ENCODE measurements at regions of chr9 and their contacts with region 1.

Region 1: DNA sequence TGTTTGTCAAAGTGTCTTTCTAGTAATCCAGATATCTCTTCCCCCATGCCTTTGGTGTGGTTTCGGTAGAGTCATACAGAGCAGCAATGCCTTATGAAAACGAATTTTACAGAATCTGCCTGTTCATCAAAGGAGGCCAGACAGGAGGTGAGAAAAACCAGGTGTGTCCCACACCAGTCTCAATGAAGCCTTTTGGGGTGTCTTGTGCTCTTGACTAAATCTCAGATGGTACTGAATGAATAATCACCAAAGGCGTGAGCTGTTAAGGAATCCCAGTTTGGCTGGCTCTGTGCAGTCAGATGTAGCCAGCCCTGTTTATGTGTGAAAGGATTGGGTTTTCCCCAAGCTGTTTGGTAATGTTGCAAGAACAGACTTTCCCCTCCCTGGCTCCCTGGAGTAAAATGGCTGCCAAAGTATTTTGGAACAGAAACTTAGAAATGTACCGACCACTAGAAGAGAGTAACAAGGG is 70.8 kb upstream of the CDKN2B start:
- DNase-seq: peak; percentile 76
- H3K4me3 Mint-ChIP-seq: peak overlapping the region; percentile 24
- H3K27ac Mint-ChIP-seq: peak overlapping the region; percentile 42
- H3K4me1 Mint-ChIP-seq: peaks cover 43% of the 10 kb centered on the region
- H3K27me3 Mint-ChIP-seq: peaks cover 52% of the 10 kb centered on the region

Region 2: DNA sequence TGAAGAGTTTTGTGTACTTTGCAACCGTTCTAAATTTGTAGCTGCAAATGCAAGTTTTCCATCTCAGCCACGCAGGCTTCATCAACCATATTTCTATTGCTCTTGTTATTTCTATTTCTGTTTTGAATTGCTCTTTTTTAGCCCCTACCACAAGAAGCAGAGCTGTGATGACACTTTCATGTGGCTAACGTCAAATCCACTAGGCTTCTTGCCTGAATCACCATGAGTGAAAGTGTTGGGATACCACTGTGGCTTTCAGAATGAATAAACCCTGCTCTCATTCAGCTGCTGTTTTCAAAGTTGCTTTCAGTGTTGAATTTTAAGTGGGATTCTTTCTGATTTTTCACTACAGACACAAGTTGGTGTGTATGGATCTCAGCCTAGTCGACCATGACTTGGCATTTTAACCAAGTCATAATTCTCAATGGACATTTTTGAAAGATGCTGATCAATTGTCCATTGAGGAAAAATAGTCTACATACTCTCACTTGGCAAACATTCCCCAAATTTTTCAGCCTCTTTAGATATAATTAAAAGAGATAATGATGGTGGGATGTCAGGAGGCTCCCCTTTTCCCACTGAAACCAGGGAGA is 318.5 kb before region 1 on chr9:
- CTCF ChIA-PET with region 1: no interaction called
- POLR2A ChIA-PET with region 1: no interaction called
- intact Hi-C with region 1: loop called (anchors 1 kb)
- DNase-seq: peak; percentile 42
- H3K4me3 Mint-ChIP-seq: no peak overlapping the region
- H3K27ac Mint-ChIP-seq: no peak overlapping the region
- H3K4me1 Mint-ChIP-seq: peaks cover 10% of the 10 kb centered on the region
- H3K27me3 Mint-ChIP-seq: peaks cover 40% of the 10 kb centered on the region

Region 3: DNA sequence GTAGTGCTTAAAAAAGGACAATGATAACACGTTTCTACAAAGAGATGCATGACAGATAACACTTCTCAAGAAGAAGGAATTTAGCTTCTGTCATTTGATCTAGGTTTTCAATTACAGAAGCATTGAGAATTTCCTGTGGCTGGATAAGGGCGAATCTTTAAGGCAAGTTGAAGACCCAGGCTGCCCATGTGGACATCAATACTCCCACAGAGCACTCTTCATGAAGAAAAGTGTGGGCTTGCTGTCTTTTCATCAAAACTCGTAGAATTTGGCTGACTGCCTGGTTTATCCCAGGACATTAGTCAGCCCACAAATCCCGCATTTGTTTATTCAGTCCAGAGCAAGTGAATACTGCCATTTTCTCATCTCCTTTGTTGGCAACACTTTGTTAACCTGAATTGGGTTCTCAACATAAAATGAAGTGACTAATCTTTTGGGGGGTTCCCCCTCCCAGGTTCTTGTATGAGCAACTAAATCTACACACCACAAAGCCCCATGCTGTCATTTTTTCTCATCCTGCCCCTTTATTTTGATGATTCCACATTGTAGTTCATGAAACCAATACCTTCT is 27.4 kb before region 1 on chr9:
- CTCF ChIA-PET with region 1: no interaction called
- POLR2A ChIA-PET with region 1: interaction called, 4 read pairs
- intact Hi-C with region 1: loop called (anchors 1 kb)
- DNase-seq: peak; percentile 50
- H3K4me3 Mint-ChIP-seq: no peak overlapping the region
- H3K27ac Mint-ChIP-seq: no peak overlapping the region
- H3K4me1 Mint-ChIP-seq: peaks cover 26% of the 10 kb centered on the region
- H3K27me3 Mint-ChIP-seq: peaks cover 12% of the 10 kb centered on the region

Region 4: GRCh38 chr9:22147813-22148524 is 68.1 kb after region 1 on chr9:
- CTCF ChIA-PET with region 1: interaction called, 3 read pairs
- POLR2A ChIA-PET with region 1: interaction called, 3 read pairs
- intact Hi-C with region 1: loop called (anchors 1 kb)
- DNase-seq: peak; percentile 24
- H3K4me3 Mint-ChIP-seq: no peak overlapping the region
- H3K27ac Mint-ChIP-seq: no peak overlapping the region
- H3K4me1 Mint-ChIP-seq: peaks cover 24% of the 10 kb centered on the region
- H3K27me3 Mint-ChIP-seq: peaks cover 23% of the 10 kb centered on the region